ENCODE measurements at regions of chr17 and their contacts with region 1.

Region 1: DNA sequence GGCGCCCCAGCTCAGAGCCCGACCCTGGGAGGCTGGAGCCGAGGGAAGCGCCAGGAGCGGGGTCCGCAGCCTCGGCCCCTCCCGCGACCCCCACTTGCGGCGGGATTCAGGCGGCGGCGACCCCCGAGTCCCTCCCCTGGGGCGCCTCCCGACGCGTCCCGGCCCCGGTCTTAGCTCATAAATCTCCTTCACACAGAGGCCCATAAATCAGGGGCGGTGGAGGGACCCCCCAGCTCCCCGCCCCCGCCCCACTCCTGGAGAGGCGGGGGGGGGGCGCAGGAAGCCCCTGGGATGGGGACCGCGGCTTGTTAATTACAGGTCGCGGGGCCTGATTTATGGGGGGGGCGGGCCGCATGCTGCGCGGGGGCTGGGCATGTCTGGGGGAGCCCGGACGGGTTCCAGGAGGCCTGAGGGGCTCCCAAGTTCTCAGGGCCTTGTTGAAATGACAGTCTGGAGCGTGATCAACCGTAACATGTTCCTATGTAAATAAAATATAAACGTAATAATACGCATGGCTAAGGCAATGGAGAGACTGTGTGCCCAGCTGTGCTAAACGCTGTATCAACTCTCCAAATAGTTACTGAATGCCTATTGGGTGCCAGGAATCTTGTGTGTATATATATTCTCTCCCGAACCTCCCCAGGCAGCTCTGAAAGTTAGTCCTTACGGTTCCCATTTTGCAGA is 10.0 kb upstream of the BHLHA9 start:
- DNase-seq: no peak
- ATAC-seq: peak in 1 of 2 experiments; percentile 12; a peak in 3 of 6 replicates
- H3K4me3 ChIP-seq: peak overlapping the region; percentile 57
- H3K27ac ChIP-seq: peak overlapping the region; percentile 72 to 82
- H3K4me1 ChIP-seq: no peaks in the 10 kb centered on the region
- CTCF ChIP-seq: no peak
- EP300 ChIP-seq: no peak
- POLR2A ChIP-seq: no peak
- RAD21 ChIP-seq: no peak

Region 2: DNA sequence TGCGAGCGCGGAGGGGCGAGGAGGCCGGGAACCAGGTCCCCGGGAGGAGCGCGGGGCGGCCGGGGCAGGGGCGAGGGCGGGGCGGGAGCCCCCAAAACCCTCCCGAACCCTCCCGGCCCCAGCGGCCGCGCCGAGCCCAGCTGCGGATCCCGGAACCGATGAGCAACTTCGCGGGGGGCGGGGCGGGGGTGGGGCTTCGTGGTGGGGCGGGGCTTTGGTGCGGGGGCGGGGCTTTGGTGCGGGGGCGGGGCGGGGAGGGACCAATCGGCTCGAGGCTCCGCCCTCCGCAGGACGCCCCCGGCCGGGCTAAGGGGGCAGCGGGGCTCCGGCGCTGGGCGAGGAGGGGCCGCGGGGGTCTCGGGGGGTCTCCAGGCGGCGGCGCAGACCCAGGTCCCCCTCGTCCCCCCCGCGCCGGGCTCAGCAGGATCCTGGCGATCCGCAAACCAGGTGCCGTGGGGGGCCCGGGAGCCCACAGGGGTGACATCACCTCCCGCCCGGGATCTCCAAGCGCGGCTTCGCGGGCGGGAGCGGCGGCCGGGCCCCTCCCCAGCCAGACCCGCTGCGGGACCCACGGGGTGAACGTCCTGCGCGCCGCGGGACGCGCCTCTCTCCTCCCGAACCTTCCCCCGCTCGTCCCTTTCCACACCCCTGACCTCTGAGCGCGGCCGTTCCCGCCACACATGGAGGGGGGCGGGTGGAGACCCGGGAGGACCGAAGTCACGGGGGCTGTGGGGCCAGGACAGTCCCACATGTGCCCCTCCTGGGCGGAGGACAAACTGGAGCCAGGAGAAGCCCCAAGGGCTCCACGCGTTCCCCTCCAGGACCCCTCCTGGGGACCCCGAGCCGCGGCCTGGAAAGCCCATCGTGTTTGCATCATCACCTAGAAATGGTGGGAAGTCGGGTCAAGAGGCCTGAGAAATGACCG is 80.1 kb before region 1 on chr17 and contains the start of gene ABR:
- CTCF ChIA-PET with region 1: no interaction called
- POLR2A ChIA-PET with region 1: no interaction called
- DNase-seq: no peak
- ATAC-seq: peak; percentile 25 to 43; a peak in 5 of 6 replicates
- H3K4me3 ChIP-seq: peak within 1 kb of the TSS; percentile 86
- H3K27ac ChIP-seq: peak within 1 kb of the TSS; percentile 80 to 91
- H3K4me1 ChIP-seq: peaks cover 6% of the 10 kb centered on the region; the same call in 1 of the 3 replicates
- CTCF ChIP-seq: no peak
- EP300 ChIP-seq: no peak
- POLR2A ChIP-seq: no peak; the same call in 1 of the 2 replicates
- RAD21 ChIP-seq: no peak
- polyA plus RNA-seq, gene ABR: 62.5 and 70.9 TPM in 2 replicates

Region 3: DNA sequence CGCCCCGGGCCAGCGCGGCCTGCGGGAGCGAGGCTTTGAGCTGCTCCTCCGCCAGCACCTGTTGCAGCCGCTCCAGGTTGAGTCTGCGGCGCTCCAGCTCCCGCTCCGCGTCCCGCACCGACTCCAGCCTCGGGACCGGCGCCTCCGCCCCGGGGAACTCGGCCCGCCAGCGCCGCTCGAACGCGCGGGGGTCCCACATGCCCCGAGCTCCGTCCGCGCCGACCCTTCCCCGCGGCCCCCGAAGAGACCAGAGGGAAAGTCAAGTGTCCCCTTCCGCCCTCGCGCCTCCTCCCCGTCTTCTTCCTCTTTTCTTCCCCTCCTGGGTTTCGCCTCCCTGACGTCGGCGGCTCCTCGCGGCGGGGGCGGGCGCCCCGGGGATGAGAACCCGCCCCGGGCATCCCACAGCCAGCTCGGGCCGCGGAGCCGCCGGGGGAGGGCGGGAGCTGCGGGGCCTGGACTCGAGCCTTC is 30.8 kb before region 1 on chr17:
- CTCF ChIA-PET with region 1: interaction called, 16 read pairs
- POLR2A ChIA-PET with region 1: no interaction called
- DNase-seq: peak in 1 of 2 experiments; percentile 78
- ATAC-seq: peak; percentile 58 to 66
- H3K4me3 ChIP-seq: peak overlapping the region; percentile 77
- H3K27ac ChIP-seq: peak overlapping the region; percentile 65 to 84
- H3K4me1 ChIP-seq: peaks cover 22% of the 10 kb centered on the region
- CTCF ChIP-seq: no peak
- EP300 ChIP-seq: no peak
- POLR2A ChIP-seq: peak; percentile 34
- RAD21 ChIP-seq: no peak

Region 4: DNA sequence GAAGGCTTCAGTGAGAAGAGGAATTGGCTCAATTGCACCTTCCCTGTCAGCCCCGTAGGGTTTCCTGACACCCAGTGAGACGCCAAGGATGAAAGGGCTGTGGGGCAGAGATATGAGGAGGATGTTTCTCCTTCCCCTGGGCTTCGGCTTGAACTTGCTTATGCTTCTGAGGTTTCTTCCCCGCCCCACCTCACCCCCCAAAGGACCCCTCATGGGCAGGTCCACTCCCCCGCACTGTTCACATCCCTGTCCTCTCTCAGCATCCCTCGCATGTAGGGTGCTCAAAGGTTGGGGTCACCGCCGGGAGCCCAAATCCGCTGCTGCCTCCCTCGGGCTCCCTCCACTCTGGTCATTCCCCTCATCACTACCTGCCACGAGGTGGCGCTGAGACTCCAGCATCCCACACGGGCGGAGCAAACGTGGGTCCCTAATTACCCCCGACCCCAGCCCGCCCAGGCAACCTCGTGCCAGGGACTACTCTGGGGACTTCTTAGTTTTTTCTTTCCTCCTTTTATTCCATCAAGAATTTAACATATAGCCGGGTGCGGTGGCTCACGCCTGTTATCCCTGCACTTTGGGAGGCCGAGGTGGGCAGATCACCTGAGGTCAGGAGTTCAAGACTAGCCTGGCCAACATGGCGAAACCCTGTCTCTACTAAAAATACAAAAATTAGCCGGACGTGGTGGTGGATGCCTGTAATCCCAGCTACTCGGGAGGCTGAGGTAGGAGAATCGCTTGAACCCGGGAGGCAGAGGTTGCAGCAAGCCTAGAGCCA is 15.9 kb after region 1 on chr17:
- CTCF ChIA-PET with region 1: interaction called, 14 read pairs
- POLR2A ChIA-PET with region 1: no interaction called
- DNase-seq: peak; percentile 54 to 79
- ATAC-seq: peak; percentile 68 to 88
- H3K4me3 ChIP-seq: 0 out of 3 replicates have a peak overlapping the region, but pooled peaks have one; percentile 24
- H3K27ac ChIP-seq: peak overlapping the region in 1 of 2 experiments; percentile 5; a peak in 2 of 6 replicates
- H3K4me1 ChIP-seq: 0 out of 3 replicates have a peak, but pooled peaks cover 4% of the 10 kb centered on the region
- CTCF ChIP-seq: peak; percentile 93
- EP300 ChIP-seq: no peak
- POLR2A ChIP-seq: no peak
- RAD21 ChIP-seq: peak; percentile 92 to 94

Region 5: DNA sequence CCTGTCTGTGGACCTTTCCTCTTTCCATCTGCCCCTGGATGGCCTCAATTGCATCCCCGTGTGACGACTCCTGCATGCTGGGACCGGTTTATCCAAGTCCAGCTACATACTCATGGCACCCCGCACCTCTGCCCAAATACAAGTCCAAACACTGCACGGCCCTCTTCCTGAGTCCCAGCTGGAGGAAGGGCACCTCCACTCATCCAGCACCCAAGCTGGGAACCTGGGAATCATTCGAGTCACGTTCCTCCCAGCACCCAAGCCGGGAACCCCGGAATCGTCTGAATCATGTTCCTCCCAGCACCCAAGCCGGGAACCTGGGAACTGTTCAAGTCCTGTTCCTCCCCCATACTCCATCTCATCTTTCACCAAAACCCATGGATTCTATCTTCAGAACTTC is 29.5 kb after region 1 on chr17:
- CTCF ChIA-PET with region 1: no interaction called
- POLR2A ChIA-PET with region 1: no interaction called
- DNase-seq: no peak
- ATAC-seq: no peak
- H3K4me3 ChIP-seq: no peak overlapping the region
- H3K27ac ChIP-seq: no peak overlapping the region
- H3K4me1 ChIP-seq: no peaks in the 10 kb centered on the region
- CTCF ChIP-seq: no peak
- EP300 ChIP-seq: no peak
- POLR2A ChIP-seq: no peak
- RAD21 ChIP-seq: no peak

Region 6: GRCh38 chr17:1431631-1432104 is 171.4 kb after region 1 on chr17:
- CTCF ChIA-PET with region 1: no interaction called
- POLR2A ChIA-PET with region 1: no interaction called
- DNase-seq: no peak
- ATAC-seq: no peak
- H3K4me3 ChIP-seq: no peak overlapping the region
- H3K27ac ChIP-seq: no peak overlapping the region
- H3K4me1 ChIP-seq: no peaks in the 10 kb centered on the region
- CTCF ChIP-seq: no peak
- EP300 ChIP-seq: no peak
- POLR2A ChIP-seq: no peak
- RAD21 ChIP-seq: no peak